H1 (cell line): ENCODE measurements at regions of chr4 and their contacts with region 1.

Region 1: GRCh38 chr4:184537269-184538022 is 63.1 kb upstream of the IRF2 start:
- DNase-seq: peak; percentile 82 to 99
- H3K4me3 ChIP-seq: peak overlapping the region; percentile 79 to 93 (median 83)
- H3K27ac ChIP-seq: peak overlapping the region; percentile 66
- H3K4me1 ChIP-seq: peaks cover 0 to 6% (median 3%) of the 10 kb centered on the region in 4 experiments; a peak in 5 of 7 replicates
- H3K27me3 ChIP-seq: no peaks in the 10 kb centered on the region
- CTCF ChIP-seq: peak in 1 of 3 experiments; percentile 4; a peak in 1 of 4 replicates
- EP300 ChIP-seq: no peak
- POLR2A ChIP-seq: peak in 1 of 2 experiments; percentile 72; a peak in 2 of 3 replicates
- RAD21 ChIP-seq: no peak

Region 2: GRCh38 chr4:184263910-184264732 is 273.3 kb before region 1 on chr4:
- CTCF ChIA-PET with region 1: interaction called, 10 read pairs
- POLR2A ChIA-PET with region 1: no interaction called
- DNase-seq: peak; percentile 65 to 94
- H3K4me3 ChIP-seq: no peak overlapping the region
- H3K27ac ChIP-seq: no peak overlapping the region
- H3K4me1 ChIP-seq: peaks cover 0 to 5% (median 0%) of the 10 kb centered on the region in 4 experiments; a peak in 4 of 7 replicates
- H3K27me3 ChIP-seq: no peaks in the 10 kb centered on the region
- CTCF ChIP-seq: peak; percentile 50 to 93 (median 82)
- EP300 ChIP-seq: no peak
- POLR2A ChIP-seq: no peak
- RAD21 ChIP-seq: peak; percentile 86 to 92

Region 3: DNA sequence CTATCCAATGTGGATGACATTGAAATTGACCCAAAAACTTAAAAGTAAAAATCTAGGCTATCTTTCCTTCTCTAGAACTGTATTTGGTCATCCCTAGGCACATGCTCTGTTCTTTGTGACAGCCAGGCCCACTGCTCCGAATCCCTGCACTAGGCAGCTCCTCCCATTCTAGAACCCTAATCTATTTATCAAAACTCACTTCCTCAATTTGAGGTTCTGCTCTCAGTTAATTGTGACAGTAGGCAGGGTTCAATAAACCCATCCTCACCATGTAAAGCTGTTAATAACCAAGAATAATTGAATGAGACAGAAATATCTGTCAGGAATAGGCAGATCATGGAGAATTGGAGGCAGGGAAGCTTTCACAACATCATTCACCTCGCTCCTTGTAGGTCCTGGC is 11.2 kb before region 1 on chr4:
- CTCF ChIA-PET with region 1: no interaction called
- POLR2A ChIA-PET with region 1: no interaction called
- DNase-seq: no peak
- H3K4me3 ChIP-seq: no peak overlapping the region
- H3K27ac ChIP-seq: no peak overlapping the region
- H3K4me1 ChIP-seq: no peaks in the 10 kb centered on the region
- H3K27me3 ChIP-seq: no peaks in the 10 kb centered on the region
- CTCF ChIP-seq: no peak
- EP300 ChIP-seq: no peak
- POLR2A ChIP-seq: no peak
- RAD21 ChIP-seq: no peak